Panc1 (cell line): ENCODE measurements at regions of chrX and their contacts with region 1.

Region 1: DNA sequence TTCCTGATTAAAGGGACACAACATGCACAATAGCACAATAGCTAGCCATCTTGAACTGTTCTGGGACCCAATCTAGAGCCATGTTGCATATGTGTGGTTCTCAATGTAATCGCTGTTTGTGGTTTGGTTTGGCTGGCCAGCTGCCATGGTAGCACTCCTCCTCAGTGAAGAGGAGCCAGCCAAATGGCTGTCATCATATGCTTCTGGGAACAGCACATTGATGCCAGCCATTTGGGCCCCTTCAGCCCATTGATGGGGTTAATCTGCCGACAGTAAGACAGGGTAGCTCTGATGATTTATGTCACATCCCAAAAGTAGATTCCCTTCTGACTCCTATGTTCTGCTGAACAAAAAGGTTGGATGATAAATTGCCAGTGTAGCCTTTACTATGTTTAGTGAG is 48.5 kb downstream of the AWAT2 start:
- DNase-seq: no peak
- ATAC-seq: no peak
- H3K4me3 ChIP-seq: no peak overlapping the region
- H3K27ac ChIP-seq: no peak overlapping the region
- H3K4me1 ChIP-seq: no peaks in the 10 kb centered on the region
- H3K27me3 ChIP-seq: no peaks in the 10 kb centered on the region
- CTCF ChIP-seq: no peak

Region 2: GRCh38 chrX:69961365-69962072 is 39.8 kb before region 1 on chrX:
- CTCF ChIA-PET with region 1: no interaction called
- POLR2A ChIA-PET with region 1: no interaction called
- in situ Hi-C with region 1: no loop called
- intact Hi-C with region 1: no loop called
- DNase-seq: no peak
- ATAC-seq: no peak
- H3K4me3 ChIP-seq: no peak overlapping the region
- H3K27ac ChIP-seq: no peak overlapping the region
- H3K4me1 ChIP-seq: no peaks in the 10 kb centered on the region
- H3K27me3 ChIP-seq: no peaks in the 10 kb centered on the region
- CTCF ChIP-seq: no peak

Region 3: DNA sequence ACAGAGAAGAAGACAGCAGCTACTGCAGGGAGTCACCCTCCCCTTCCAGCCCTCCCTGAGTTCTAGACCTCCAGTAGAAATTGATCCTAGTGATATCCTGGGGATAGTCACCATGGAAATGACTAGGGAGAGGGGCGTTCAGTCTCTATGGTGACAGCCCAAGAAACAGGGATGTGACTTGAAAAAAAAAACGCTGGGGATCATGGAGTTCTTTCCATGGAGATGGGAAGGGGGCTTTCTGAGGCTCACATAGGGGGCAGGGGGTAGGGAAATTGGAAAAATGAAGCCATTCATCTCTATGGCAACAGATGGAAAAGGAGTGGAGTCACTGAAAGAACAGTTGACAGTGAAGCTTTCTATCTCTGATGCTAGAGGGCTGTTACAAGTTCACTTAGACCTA is 104.0 kb after region 1 on chrX:
- CTCF ChIA-PET with region 1: no interaction called
- POLR2A ChIA-PET with region 1: interaction called, 19 read pairs
- in situ Hi-C with region 1: no loop called
- intact Hi-C with region 1: no loop called
- DNase-seq: no peak
- ATAC-seq: no peak
- H3K4me3 ChIP-seq: no peak overlapping the region
- H3K27ac ChIP-seq: no peak overlapping the region
- H3K4me1 ChIP-seq: no peaks in the 10 kb centered on the region
- H3K27me3 ChIP-seq: no peaks in the 10 kb centered on the region
- CTCF ChIP-seq: no peak